Breast epithelium (tissue), 4 donors: ENCODE measurements at regions of chr3 and their contacts with region 1.

Region 1: DNA sequence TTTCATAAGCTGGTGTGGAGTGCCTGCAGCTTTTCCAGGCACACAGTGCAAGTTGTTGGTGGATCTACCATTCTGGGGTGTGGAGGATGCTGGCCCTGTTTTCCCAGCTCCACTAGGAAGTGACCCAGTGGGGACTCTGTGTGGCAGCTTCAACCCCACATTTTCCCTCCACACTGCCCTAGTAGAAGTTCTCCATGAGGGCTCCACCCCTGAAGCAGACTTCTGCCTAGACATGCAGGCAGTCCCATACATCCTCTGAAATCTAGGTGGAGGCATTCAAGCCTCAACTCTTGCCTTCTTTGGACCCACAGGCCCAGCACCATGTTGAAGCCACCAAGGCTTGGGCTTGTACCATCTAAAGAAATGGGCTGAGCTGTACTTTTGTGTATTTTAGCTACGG is 206.2 kb upstream of the GRM7 start:
- DNase-seq: no peak
- H3K4me3 ChIP-seq: no peak overlapping the region
- H3K27ac ChIP-seq: no peak overlapping the region
- H3K4me1 ChIP-seq: no peaks in the 10 kb centered on the region
- H3K27me3 ChIP-seq: no peaks in the 10 kb centered on the region
- CTCF ChIP-seq: no peak
- POLR2A ChIP-seq: no peak

Region 2: GRCh38 chr3:6667354-6667753 is 12.7 kb after region 1 on chr3:
- intact Hi-C with region 1: loop called (anchors 1 kb)
- DNase-seq: no peak
- H3K4me3 ChIP-seq: no peak overlapping the region
- H3K27ac ChIP-seq: no peak overlapping the region
- H3K4me1 ChIP-seq: no peaks in the 10 kb centered on the region
- H3K27me3 ChIP-seq: no peaks in the 10 kb centered on the region
- CTCF ChIP-seq: no peak
- POLR2A ChIP-seq: no peak